K562 (cell line): ENCODE measurements at regions of chr6 and their contacts with region 1.

Region 1: DNA sequence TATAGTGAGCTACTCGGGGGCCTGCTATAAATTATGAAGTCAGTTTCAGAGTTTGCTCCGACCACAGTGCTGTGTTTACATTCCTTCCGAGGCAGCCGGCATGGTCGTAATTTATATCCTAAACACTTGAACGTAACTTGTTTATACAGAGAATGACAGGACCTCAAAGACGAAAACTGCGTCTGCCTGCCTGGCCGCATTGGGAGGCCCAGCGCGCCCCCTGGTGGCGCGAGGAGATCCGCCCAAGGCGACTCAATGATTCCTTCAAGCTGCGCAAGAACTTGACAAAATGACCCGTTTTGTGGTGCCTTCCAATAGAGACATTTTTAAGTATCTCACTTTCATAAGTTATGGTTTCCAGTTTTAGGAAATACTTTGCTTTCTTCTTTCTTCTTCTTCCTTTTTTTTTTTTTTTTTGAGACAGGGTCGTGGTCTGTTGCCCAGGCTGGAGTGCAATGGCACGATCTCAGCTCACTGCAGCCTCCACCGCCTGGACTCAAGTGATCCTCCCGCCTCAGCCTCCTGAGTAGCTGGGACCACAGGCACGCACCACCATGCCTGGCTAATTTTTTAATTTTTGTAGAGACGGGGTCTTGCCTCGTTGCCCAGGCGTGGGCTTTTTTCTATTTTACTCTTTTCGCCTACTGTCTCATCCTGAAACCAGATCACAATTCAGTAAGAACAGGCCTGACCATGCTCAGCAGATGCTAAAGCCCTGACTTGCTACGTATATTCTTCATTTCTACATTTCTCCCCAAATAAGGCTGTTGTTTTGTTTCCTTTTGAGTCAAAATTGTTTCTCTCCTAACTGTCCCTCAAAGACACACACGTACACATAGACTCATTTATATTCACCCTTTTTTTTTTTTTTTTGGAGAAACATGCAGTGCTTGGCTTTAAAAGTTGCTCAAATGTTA is 7.8 kb downstream of the FOXF2 start:
- DNase-seq: peak; percentile 82 to 87 (median 85)
- ATAC-seq: peak; percentile 95
- H3K4me3 ChIP-seq: no peak overlapping the region
- H3K27ac ChIP-seq: no peak overlapping the region
- H3K4me1 ChIP-seq: peaks cover 0 to 16% of the 10 kb centered on the region in 2 experiments; a peak in 2 of 5 replicates
- H3K27me3 ChIP-seq: peaks cover 48 to 65% of the 10 kb centered on the region in 2 experiments
- CTCF ChIP-seq: peak; percentile 89 to 99 (median 93)
- EP300 ChIP-seq: no peak
- POLR2A ChIP-seq: no peak
- RAD21 ChIP-seq: peak; percentile 77 to 88

Region 2: DNA sequence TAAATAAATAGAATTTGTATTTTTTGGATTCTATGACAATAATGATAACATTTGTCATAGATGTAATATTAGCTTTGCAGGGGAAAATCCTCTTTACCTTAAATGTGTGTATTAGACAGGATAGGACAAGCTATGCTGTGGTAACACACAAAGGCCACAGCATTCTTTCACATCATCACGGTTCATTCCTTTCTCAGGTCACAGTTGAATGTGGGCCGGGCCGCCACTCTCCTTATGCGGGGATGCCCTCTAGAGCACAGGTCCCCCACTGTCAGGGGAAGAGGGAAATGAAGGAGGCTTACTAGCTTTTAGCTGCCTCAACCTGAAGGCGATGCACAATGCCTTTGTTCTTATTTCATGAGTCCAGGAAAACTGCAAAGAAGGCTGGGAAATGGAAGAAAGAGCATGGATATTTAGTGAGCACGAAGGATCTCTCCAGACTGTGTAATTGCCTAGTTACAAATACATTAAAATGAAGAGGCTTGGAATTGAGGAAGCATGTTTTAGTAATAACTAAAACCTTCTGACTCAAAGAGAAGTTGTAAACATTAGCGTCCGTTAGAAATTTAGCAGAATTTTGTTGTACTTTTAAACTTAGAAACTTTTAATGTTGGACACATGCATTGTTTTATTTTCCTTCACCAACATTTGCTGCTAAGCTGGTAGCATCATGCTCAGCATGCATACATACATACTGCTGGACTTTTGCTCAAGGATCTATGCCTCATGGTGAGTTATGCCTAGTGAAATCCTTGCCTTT is 334.2 kb before region 1 on chr6:
- CTCF ChIA-PET with region 1: no interaction called
- POLR2A ChIA-PET with region 1: no interaction called
- in situ Hi-C with region 1: no loop called
- intact Hi-C with region 1: no loop called
- DNase-seq: no peak
- ATAC-seq: no peak
- H3K4me3 ChIP-seq: no peak overlapping the region
- H3K27ac ChIP-seq: no peak overlapping the region
- H3K4me1 ChIP-seq: no peaks in the 10 kb centered on the region
- H3K27me3 ChIP-seq: peaks cover 0 to 32% of the 10 kb centered on the region in 2 experiments; a peak in 2 of 5 replicates
- CTCF ChIP-seq: peak; percentile 13 to 18 (median 18); a peak in 1 of 6 replicates
- EP300 ChIP-seq: no peak
- POLR2A ChIP-seq: no peak
- RAD21 ChIP-seq: peak in 1 of 2 experiments; percentile 35; a peak in 2 of 4 replicates

Region 3: DNA sequence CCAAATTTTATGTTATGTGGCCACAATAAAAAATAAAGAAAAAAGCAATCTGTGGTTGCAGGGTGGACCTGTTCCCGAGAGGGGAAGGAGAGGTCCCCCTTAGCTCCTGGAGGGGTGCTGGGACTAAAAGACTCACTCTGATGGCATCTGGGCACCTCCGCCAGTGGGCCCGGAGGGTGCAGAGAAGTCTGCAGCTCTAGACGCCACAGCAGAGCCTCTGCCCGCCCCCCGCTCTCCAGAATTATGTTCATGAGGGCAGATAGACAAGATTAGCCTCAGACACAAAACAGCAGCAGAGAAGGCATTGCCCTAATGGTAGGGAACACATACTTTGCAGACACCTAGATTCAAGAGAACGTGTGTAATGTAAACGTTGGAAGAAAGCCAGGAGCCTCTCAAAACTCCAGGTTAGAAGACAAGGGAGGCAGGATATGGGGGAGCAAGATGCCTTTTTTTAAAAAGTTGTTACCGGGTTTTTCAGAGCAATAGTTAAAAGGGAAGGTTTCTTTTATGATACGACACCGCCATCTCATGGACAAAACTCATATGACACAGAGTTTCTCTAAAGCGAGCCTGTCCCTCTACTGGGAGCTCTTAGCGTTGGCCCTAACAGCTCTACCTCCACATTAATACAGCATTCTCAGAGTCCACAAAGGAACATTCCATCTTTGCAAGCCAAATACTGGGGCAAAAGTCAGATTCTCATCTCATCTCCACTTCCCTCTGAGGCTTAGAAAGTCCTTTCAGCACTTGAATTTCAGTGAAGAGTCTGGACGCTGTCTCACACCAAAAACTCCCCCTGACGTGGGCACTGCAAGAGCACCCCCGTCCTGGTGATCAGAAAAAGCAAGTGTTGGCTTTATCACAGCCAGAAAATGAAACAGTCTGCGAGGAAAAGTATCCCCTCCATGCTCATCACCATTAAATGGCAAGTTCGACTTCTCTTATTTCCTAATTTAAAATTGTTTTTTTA is 39.4 kb after region 1 on chr6:
- CTCF ChIA-PET with region 1: interaction called, 11 read pairs
- POLR2A ChIA-PET with region 1: no interaction called
- in situ Hi-C with region 1: no loop called
- intact Hi-C with region 1: no loop called
- DNase-seq: peak; percentile 73 to 79 (median 76)
- ATAC-seq: peak; percentile 99
- H3K4me3 ChIP-seq: no peak overlapping the region
- H3K27ac ChIP-seq: no peak overlapping the region
- H3K4me1 ChIP-seq: no peaks in the 10 kb centered on the region
- H3K27me3 ChIP-seq: peaks cover 2 to 14% of the 10 kb centered on the region in 2 experiments; a peak in 2 of 5 replicates
- CTCF ChIP-seq: peak; percentile 78 to 97 (median 97)
- EP300 ChIP-seq: no peak
- POLR2A ChIP-seq: no peak
- RAD21 ChIP-seq: peak; percentile 77 to 85